ENCODE measurements at regions of chr6 and their contacts with region 1.

Region 1: GRCh38 chr6:43506667-43507471 is 3.3 kb downstream of the LRRC73 start:
- DNase-seq: peak; percentile 78
- H3K4me3 ChIP-seq: no peak overlapping the region
- H3K27ac ChIP-seq: no peak overlapping the region
- H3K4me1 ChIP-seq: peaks cover 4% of the 10 kb centered on the region
- H3K27me3 ChIP-seq: no peaks in the 10 kb centered on the region
- CTCF ChIP-seq: peak; percentile 89 to 99 (median 96)
- POLR2A ChIP-seq: no peak

Region 2: GRCh38 chr6:43386492-43386891 is 120.4 kb before region 1 on chr6:
- intact Hi-C with region 1: loop called (anchors 5 kb)
- DNase-seq: no peak
- H3K4me3 ChIP-seq: no peak overlapping the region
- H3K27ac ChIP-seq: no peak overlapping the region
- H3K4me1 ChIP-seq: no peaks in the 10 kb centered on the region
- H3K27me3 ChIP-seq: no peaks in the 10 kb centered on the region
- CTCF ChIP-seq: peak in 3 of 4 experiments; percentile 22 to 61 (median 53)
- POLR2A ChIP-seq: no peak

Region 3: DNA sequence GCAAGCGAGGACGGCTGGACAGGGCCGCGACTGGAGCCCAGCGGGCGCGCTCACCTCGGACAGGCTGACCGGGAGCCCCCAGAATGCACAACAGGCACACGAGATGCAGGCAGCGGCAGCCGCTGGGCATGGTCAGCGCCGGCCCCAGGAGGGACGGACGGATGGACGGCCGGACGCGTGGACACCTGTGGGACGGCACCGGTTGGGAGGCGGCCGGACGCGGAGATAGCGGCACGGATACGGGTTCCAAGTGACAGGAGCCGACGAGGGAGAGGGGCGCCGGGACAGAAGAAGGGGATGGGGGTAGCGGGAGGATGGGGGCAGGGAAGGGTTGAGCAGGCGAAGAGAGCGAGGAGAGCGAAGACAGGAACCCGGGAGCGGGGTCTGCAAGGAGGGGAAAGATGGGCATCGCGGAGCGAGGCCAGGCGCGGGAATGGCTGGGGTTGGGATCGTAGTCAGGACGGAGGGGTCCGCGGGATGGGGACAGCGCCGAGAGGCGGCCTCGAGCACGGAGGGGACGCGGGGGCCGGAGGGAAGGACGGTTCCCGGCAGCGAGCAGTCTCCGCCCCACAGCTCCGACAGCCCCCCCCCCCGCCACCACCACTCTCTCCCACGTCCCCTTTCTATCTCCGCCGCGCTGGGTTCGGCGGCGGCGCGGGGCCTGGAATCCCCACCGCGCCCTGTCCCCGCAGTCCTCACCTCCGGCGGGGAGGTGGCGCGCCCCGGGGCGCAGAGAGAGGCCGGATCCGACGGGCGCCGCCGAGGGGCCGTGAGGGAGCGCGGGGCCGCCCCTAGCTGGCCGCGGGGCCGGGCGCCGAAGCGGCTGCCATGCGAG is 52.0 kb before region 1 on chr6:
- intact Hi-C with region 1: loop called (anchors 2 kb)
- DNase-seq: peak; percentile 84
- H3K4me3 ChIP-seq: peak overlapping the region; percentile 45 to 48
- H3K27ac ChIP-seq: peak overlapping the region; percentile 62 to 71
- H3K4me1 ChIP-seq: no peaks in the 10 kb centered on the region
- H3K27me3 ChIP-seq: no peaks in the 10 kb centered on the region
- CTCF ChIP-seq: no peak
- POLR2A ChIP-seq: no peak

Measured in prostate gland (tissue), 2 donors.